K562 (cell line): ENCODE measurements at regions of chr22 and their contacts with region 1.

Region 1: DNA sequence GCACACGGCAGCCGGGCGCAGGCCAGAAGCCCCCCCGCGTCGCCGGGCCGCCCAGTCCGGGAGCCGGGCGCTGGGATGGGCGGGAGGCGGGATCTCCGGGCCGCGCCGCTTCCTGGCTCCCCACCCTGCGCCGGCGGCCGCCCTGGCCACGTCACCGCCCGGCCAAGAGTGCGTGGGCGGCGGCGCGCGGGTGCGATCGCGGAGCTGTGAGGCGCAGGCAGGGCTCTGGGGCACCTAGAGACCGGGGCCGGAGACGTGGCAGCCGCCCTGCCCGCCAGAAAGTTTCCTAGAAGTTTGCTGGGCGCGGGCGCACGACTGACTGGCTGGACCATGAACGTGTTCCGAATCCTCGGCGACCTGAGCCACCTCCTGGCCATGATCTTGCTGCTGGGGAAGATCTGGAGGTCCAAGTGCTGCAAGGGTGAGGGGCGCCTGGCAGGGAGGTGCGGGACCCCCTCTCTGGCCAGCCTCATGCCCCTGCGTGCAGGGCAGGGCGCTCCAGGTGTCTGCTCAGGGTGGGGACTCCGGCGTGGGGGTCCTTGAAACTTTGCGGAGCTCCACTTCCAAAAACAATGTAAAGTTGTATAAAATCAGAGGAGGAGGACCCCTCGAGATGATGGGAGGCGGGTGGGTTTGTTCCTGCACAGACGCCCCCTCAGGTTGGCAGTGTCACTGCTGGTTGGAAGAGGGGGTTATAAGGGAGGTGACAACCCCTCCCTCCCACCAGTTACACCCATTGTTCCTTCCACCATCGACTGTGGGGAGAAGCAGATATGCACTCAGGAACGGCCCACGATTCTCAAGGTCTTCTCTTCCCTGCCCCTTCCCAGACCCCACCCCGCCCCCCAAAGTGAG is at the start of gene KDELR3:
- DNase-seq: peak; percentile 79 to 93 (median 92)
- ATAC-seq: peak; percentile 91
- H3K4me3 ChIP-seq: peak within 1 kb of the TSS; percentile 62
- H3K27ac ChIP-seq: peak within 1 kb of the TSS; percentile 82
- H3K4me1 ChIP-seq: peaks cover 16 to 38% of the 10 kb centered on the region in 2 experiments; a peak in 4 of 5 replicates
- H3K27me3 ChIP-seq: no peaks in the 10 kb centered on the region
- CTCF ChIP-seq: peak in 2 of 3 experiments; percentile 21 to 41; a peak in 2 of 6 replicates
- EP300 ChIP-seq: no peak
- POLR2A ChIP-seq: peak; percentile 65
- RAD21 ChIP-seq: no peak
- polyA plus RNA-seq, gene KDELR3: 7.6 to 8.5 TPM

Region 2: DNA sequence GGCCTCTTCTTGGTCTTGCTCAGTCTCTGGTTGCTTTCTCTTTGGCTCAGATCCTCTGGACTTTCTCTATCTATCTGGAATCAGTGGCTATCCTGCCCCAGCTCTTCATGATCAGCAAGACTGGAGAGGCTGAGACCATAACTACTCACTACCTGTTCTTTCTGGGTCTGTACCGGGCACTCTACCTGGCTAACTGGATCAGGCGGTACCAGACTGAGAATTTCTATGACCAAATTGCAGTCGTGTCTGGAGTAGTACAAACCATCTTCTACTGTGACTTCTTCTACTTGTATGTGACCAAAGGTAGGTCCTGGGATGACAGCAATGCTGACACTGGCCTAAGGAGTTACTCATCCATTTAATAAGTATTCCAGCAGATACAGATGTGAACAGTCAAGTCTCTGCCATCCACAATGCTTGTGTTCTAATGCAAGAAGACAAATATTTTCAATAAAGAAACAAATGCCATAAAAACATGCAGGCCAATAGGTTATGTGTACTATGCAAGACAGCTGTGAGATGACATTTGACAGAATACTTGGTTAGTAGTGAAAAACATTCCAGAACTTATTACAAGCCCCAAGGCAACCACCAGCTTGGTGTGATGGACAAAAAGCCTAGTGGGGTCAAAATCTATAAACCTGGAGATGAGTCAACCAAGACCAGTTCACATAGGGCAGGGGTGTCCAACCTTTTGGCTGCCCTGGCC is 13.2 kb after region 1 on chr22:
- CTCF ChIA-PET with region 1: no interaction called
- POLR2A ChIA-PET with region 1: interaction called, 11 read pairs
- in situ Hi-C with region 1: no loop called
- intact Hi-C with region 1: no loop called
- DNase-seq: no peak
- ATAC-seq: peak; percentile 16
- H3K4me3 ChIP-seq: no peak overlapping the region
- H3K27ac ChIP-seq: no peak overlapping the region
- H3K4me1 ChIP-seq: no peaks in the 10 kb centered on the region
- H3K27me3 ChIP-seq: no peaks in the 10 kb centered on the region
- CTCF ChIP-seq: no peak
- EP300 ChIP-seq: no peak
- POLR2A ChIP-seq: no peak
- RAD21 ChIP-seq: no peak